OCI-LY7 (cell line): ENCODE measurements at regions of chr4 and their contacts with region 1.

Region 1: DNA sequence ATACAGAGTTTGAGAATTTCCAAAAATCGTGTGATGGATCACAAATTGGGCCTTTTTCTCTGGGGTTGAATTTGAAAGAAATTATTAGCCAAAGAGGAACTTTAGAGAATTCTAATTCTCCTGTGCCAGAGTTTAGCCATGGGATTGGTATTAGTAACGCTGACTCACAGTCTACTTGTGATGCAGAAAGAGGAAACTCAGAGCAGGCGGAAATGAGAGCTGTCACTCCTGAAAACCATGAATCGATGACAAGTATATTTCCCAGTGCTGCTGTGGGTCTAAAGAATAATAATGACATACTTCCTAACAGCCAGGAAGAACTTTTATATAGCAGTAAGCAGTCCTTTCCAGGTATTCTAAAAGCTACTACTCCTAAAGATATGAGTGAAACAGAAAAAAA is 64.9 kb downstream of the N4BP2 start:
- DNase-seq: no peak
- H3K4me3 ChIP-seq: no peak overlapping the region
- H3K27ac ChIP-seq: no peak overlapping the region
- H3K4me1 ChIP-seq: peaks cover 5% of the 10 kb centered on the region
- CTCF ChIP-seq: no peak

Region 2: GRCh38 chr4:40086421-40086820 is 35.1 kb before region 1 on chr4:
- CTCF ChIA-PET with region 1: no interaction called
- POLR2A ChIA-PET with region 1: interaction called, 3 read pairs
- intact Hi-C with region 1: loop called (anchors 5 kb)
- DNase-seq: no peak
- H3K4me3 ChIP-seq: no peak overlapping the region
- H3K27ac ChIP-seq: no peak overlapping the region
- H3K4me1 ChIP-seq: no peaks in the 10 kb centered on the region
- CTCF ChIP-seq: no peak

Region 3: GRCh38 chr4:40099010-40099409 is 22.5 kb before region 1 on chr4:
- CTCF ChIA-PET with region 1: no interaction called
- POLR2A ChIA-PET with region 1: interaction called, 13 read pairs
- intact Hi-C with region 1: no loop called
- DNase-seq: no peak
- H3K4me3 ChIP-seq: no peak overlapping the region
- H3K27ac ChIP-seq: no peak overlapping the region
- H3K4me1 ChIP-seq: no peaks in the 10 kb centered on the region
- CTCF ChIP-seq: no peak

Region 4: DNA sequence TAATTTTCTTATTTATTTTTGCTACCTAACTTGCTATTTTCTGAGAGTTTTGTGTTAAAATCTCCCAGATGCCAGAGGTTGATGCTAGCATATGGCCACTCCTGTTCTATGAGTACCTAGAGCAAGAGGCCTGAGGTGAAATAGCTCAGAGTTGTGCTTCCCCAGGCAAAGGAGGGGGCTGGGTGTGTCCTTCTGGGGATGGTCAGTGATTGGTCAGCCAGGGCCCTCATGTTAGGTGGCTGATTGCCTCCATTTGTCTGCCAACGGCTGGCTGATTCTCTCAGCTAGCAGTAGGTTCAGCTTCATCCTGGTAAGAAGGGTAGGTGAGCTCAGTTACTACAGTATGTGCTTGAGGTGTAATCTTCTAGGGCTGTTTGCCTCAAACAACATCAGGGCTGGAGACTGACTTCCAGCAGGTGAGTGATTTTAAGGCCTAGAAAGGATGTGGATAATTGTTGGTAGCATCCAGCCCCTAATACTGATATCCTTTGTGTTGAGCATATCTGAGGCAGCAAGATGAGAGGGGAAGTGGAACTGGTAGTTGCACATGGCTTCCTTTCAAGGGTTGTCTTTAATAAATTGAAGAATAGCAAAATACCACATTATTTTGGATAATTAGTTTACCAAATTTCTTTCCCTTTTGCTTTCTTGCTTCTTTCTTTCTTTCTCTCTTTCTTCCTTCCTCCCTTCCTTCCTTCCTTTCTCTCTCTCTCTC is 12.8 kb after region 1 on chr4:
- CTCF ChIA-PET with region 1: no interaction called
- POLR2A ChIA-PET with region 1: interaction called, 24 read pairs
- intact Hi-C with region 1: no loop called
- DNase-seq: peak; percentile 7
- H3K4me3 ChIP-seq: no peak overlapping the region
- H3K27ac ChIP-seq: no peak overlapping the region
- H3K4me1 ChIP-seq: no peaks in the 10 kb centered on the region
- CTCF ChIP-seq: no peak